GM10248 (cell line): ENCODE measurements at regions of chr10 and their contacts with region 1.

Region 1: DNA sequence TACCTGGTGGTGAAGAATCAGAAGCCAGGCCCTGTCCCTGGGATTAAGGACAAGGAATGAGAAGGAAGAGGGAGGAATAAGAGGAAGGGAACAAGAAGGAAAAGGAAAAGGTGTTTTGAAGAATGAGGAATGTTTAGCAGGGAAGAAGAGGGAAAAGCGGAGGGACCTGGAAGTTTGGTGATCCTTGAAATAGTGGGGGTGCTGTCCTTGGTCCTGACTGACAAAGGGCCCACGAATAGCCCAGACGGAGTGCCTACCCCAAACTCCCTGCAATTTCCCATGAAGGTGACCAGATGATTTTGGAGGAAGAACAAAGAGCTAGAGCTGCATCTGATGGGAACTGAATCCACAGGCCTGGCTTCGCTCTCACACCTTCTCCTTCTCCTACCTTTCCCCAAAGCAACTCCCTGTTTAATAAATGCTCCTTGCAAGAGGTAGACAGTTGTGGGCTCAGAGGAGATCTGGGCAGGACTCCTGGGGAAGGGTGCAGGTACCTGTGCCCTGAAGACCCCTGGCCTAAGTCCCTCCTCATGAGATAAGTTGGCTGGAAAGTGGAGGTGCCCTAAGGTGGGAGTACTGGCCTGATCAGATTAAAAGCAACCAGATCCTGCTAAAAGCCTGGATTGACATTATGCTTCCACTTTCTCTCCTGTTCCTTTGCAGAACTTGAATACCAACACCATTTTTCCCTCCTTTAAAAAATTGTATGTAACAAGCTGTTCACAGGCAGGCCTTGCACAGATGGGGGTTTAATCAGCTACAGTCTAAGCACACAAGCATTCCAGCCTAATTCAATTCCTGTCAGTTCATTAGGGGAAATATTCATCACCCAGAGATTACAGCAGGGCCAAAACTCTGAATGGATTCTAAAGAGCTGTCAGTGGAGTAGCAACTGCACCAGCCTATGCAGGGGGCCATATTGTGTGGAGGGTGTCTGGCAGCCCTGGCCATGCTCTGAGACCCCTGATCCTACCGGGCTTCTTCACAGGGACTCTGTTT is 19.4 kb downstream of the KAZALD1 start:
- DNase-seq: peak; percentile 39
- CTCF ChIP-seq: no peak

Region 2: GRCh38 chr10:101050208-101051069 is 30.8 kb before region 1 on chr10:
- CTCF ChIA-PET with region 1: interaction called, 16 read pairs
- POLR2A ChIA-PET with region 1: no interaction called
- DNase-seq: peak; percentile 85
- CTCF ChIP-seq: peak; percentile 82

Region 3: DNA sequence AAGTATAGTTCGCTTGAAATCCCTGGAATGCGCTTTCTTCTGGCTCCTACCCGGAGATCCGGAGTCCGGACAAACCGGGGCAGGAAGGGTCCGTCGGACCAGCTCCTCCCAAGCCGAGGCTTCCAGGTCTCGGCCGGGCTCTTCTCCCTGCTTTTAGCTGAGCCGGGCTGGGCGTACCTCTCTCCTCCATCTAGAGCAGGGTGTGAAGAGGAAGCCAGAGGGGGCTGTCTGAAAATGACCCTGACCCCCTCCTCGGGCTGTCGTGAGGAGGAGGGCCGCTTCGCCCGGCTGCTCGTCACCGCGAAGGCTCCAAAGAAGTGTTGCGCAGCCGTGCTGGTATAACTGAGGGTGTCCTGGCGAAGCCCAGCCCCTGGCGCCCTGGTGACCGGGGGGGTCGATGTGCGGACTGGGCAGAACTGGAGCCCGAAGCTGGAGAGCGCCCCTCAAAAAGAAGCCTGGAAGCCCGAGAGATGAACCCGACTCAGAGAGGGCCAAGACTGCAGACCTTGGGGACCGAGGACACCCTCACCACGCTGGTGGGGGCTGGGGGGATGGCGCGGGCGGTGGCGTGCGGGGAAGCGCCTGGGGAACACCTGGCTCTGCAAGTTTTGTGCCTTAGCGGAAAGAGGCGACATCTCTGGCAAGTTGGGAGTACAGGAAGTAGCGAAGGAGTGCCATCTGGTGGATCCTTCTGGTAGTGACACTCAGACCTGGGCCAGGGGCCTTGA is 13.7 kb before region 1 on chr10:
- CTCF ChIA-PET with region 1: interaction called, 30 read pairs
- POLR2A ChIA-PET with region 1: no interaction called
- DNase-seq: peak; percentile 84
- CTCF ChIP-seq: peak; percentile 78